ENCODE measurements at regions of chr16 and their contacts with region 1.

Region 1: GRCh38 chr16:2838928-2839327 is 8.8 kb downstream of the ZG16B start:
- DNase-seq: peak; percentile 85 to 88
- ATAC-seq: peak; percentile 76 to 91
- H3K4me3 ChIP-seq: no peak overlapping the region
- H3K27ac ChIP-seq: peak overlapping the region; percentile 60 to 90
- H3K4me1 ChIP-seq: peaks cover 41% of the 10 kb centered on the region
- CTCF ChIP-seq: peak; percentile 86
- EP300 ChIP-seq: no peak
- POLR2A ChIP-seq: no peak
- RAD21 ChIP-seq: peak; percentile 90 to 96

Region 2: GRCh38 chr16:2777231-2777902 is 61.6 kb before region 1 on chr16 and contains the start of gene ELOB:
- CTCF ChIA-PET with region 1: interaction called, 14 read pairs
- POLR2A ChIA-PET with region 1: no interaction called
- DNase-seq: peak; percentile 79 to 89
- ATAC-seq: peak; percentile 74 to 84
- H3K4me3 ChIP-seq: peak within 1 kb of the TSS; percentile 95
- H3K27ac ChIP-seq: peak within 1 kb of the TSS; percentile 99 to 100
- H3K4me1 ChIP-seq: peaks cover 26% of the 10 kb centered on the region
- CTCF ChIP-seq: no peak
- EP300 ChIP-seq: no peak
- POLR2A ChIP-seq: peak; percentile 70
- RAD21 ChIP-seq: 0 out of 5 replicates have a peak, but pooled peaks of 1 of the 2 experiments have one; percentile 12
- polyA plus RNA-seq, gene ELOB: 136 and 144 TPM in 2 replicates

Region 3: DNA sequence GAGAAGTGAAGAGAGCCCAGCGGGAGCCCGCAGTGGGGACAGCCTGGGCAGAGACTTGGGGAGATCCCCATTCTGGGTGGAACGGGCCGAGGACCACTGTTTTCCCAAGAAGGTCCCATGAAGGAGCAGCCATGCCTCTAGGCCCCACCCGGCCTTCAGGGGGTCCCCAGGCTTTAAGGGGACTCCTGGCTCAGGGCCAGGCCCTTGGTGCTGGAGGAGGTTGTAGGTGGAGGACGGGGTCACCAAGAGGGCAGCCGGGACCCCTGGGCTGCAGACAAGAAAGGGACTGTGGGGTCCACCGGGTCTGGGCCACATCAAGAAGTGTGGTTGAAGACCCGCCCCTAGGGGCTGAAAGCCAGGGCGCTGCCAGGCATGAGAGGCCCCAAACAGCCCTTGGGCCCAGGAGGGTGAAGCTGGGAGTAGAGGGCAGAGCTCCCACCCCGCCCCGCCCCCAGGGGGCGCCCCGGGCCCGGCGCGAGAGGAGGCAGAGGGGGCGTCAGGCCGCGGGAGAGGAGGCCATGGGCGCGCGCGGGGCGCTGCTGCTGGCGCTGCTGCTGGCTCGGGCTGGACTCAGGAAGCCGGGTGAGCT is 22.1 kb before region 1 on chr16 and contains the start of gene PRSS21:
- CTCF ChIA-PET with region 1: interaction called, 18 read pairs
- POLR2A ChIA-PET with region 1: no interaction called
- DNase-seq: no peak
- ATAC-seq: peak in 1 of 2 experiments; percentile 52; a peak in 3 of 6 replicates
- H3K4me3 ChIP-seq: no peak within 1 kb of the TSS
- H3K27ac ChIP-seq: no peak within 1 kb of the TSS
- H3K4me1 ChIP-seq: no peaks in the 10 kb centered on the region
- CTCF ChIP-seq: no peak
- EP300 ChIP-seq: no peak
- POLR2A ChIP-seq: no peak
- RAD21 ChIP-seq: no peak
- polyA plus RNA-seq, gene PRSS21: 0.16 and 0.23 TPM in 2 replicates

Region 4: DNA sequence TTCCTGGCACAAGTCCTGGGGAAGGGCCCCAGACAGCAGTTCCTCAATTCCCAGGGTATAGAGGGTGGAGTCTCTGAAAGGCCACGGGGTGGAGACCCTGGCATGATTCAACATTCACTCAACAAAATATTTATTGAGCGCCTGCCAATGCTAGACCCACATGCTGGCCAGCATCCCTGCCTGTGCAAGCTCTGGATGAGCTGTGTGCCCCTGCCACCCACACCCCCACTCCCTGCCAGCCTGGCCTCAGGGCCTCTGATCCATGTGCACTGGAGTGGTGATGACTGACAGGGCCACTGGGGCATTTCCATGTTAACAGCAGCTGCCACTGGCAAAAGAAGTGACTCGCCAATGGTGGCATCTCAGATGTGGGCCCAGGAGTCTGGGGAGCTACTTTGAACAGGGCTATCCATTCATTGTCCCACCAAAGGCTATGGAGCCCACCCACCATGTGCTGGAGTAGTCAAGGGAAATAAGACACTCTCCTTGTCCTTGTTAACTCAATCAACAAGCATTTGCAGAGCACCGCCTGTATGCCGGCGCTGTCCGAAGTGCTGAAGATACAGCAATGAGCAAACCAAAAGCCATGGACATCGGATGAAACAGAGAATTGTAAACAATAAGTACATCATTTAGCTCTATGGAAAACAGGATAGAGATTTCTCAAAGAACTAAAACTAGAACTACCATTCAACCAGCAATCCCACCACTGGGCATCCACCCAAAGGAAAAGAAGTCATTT is 22.1 kb after region 1 on chr16:
- CTCF ChIA-PET with region 1: interaction called, 295 read pairs
- POLR2A ChIA-PET with region 1: interaction called, 3 read pairs
- DNase-seq: no peak
- ATAC-seq: no peak
- H3K4me3 ChIP-seq: no peak overlapping the region
- H3K27ac ChIP-seq: peak overlapping the region in 1 of 2 experiments; percentile 57; a peak in 3 of 6 replicates
- H3K4me1 ChIP-seq: peaks cover 13% of the 10 kb centered on the region
- CTCF ChIP-seq: no peak
- EP300 ChIP-seq: no peak
- POLR2A ChIP-seq: no peak
- RAD21 ChIP-seq: no peak

Region 5: DNA sequence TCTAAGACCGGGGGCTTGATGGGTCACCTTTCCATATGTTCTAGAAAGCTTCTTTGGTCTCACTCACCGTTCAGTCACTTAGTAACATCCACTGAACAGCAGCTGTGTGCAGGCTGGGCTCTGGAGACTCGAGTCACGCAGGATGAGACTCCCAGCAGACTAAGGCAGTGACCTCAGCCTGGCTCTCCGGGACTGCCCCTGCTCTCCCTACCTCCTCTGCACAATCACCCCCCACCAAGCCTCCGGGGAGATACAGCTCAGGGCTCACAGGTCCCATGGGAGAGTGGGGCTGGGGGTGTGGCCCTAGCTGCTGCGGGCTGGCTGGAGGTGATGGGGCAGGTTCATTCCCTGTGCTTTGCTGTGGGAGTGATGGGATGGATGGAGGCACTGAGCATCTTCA is 58.2 kb after region 1 on chr16:
- CTCF ChIA-PET with region 1: interaction called, 12 read pairs
- POLR2A ChIA-PET with region 1: no interaction called
- DNase-seq: no peak
- ATAC-seq: no peak; a peak in 2 of 6 replicates
- H3K4me3 ChIP-seq: no peak overlapping the region
- H3K27ac ChIP-seq: no peak overlapping the region
- H3K4me1 ChIP-seq: peaks cover 22% of the 10 kb centered on the region
- CTCF ChIP-seq: no peak
- EP300 ChIP-seq: no peak
- POLR2A ChIP-seq: no peak
- RAD21 ChIP-seq: no peak

Region 6: DNA sequence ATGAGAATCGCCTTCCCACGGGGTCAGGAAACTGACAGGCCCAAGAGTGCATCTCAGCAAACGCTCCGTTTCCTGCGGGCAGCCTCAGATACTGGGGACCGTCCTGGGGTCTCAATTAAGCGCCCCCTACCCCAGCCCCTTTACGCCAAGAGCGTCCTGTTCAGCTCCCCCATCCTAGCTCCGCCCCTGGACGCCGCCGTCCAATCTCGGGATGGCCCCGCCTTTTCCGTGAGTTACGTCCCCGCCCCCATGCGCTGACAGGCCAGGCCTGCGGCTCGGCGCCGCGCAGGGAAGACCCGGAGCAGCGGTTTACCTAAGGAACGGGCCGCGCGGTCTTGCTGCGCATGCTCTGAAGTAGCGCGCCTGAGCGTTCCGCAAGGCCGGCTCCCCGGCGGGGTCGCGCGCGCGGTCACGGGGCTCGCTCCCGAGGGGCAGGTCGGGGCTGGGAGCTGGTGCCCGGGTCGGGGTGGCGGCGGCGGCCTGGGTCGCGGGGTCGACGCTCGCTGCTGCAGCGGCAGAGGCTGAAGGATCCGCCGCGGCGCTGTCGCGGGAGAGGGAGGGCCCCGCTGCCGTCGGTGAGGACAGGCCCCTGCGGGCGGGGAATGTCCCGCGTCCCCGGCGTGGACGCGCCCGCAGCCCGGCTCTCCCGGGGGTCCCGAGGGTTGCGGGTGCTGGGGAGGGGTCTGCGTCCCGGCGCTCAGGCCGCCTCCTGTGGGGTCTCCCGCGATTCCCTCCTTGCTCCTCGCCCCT is 72.8 kb after region 1 on chr16 and contains the start of gene FLYWCH1:
- CTCF ChIA-PET with region 1: interaction called, 87 read pairs
- POLR2A ChIA-PET with region 1: no interaction called
- DNase-seq: peak; percentile 94 to 99
- ATAC-seq: peak; percentile 86 to 93
- H3K4me3 ChIP-seq: peak within 1 kb of the TSS; percentile 65
- H3K27ac ChIP-seq: peak within 1 kb of the TSS; percentile 86 to 97
- H3K4me1 ChIP-seq: peaks cover 25% of the 10 kb centered on the region
- CTCF ChIP-seq: no peak
- EP300 ChIP-seq: no peak
- POLR2A ChIP-seq: peak; percentile 73
- RAD21 ChIP-seq: no peak
- polyA plus RNA-seq, gene FLYWCH1: 9.3 and 10.6 TPM in 2 replicates

Region 7: GRCh38 chr16:2980227-2981086 is 141.5 kb after region 1 on chr16 and contains the start of gene PKMYT1:
- CTCF ChIA-PET with region 1: no interaction called
- POLR2A ChIA-PET with region 1: no interaction called
- DNase-seq: peak; percentile 85 to 98
- ATAC-seq: peak; percentile 70 to 82
- H3K4me3 ChIP-seq: peak within 1 kb of the TSS; percentile 71
- H3K27ac ChIP-seq: peak within 1 kb of the TSS; percentile 91 to 95
- H3K4me1 ChIP-seq: peaks cover 18% of the 10 kb centered on the region; the same call in 2 of the 3 replicates
- CTCF ChIP-seq: no peak
- EP300 ChIP-seq: no peak
- POLR2A ChIP-seq: peak; percentile 92
- RAD21 ChIP-seq: no peak
- polyA plus RNA-seq, gene PKMYT1: 8.4 and 10.5 TPM in 2 replicates

Region 8: GRCh38 chr16:3029537-3030402 is 190.8 kb after region 1 on chr16:
- CTCF ChIA-PET with region 1: no interaction called
- POLR2A ChIA-PET with region 1: no interaction called
- DNase-seq: no peak
- ATAC-seq: no peak
- H3K4me3 ChIP-seq: no peak overlapping the region
- H3K27ac ChIP-seq: no peak overlapping the region
- H3K4me1 ChIP-seq: peaks cover 14% of the 10 kb centered on the region
- CTCF ChIP-seq: no peak
- EP300 ChIP-seq: no peak
- POLR2A ChIP-seq: no peak
- RAD21 ChIP-seq: no peak

Region 9: GRCh38 chr16:3143612-3144320 is 304.8 kb after region 1 on chr16:
- CTCF ChIA-PET with region 1: no interaction called
- POLR2A ChIA-PET with region 1: no interaction called
- DNase-seq: no peak
- ATAC-seq: peak; percentile 6 to 14; a peak in 2 of 6 replicates
- H3K4me3 ChIP-seq: no peak overlapping the region
- H3K27ac ChIP-seq: no peak overlapping the region
- H3K4me1 ChIP-seq: no peaks in the 10 kb centered on the region
- CTCF ChIP-seq: no peak
- EP300 ChIP-seq: no peak
- POLR2A ChIP-seq: no peak
- RAD21 ChIP-seq: no peak

Region 10: GRCh38 chr16:3264137-3265036 is 425.5 kb after region 1 on chr16:
- CTCF ChIA-PET with region 1: no interaction called
- POLR2A ChIA-PET with region 1: no interaction called
- DNase-seq: peak; percentile 65 to 94
- ATAC-seq: peak; percentile 90 to 94
- H3K4me3 ChIP-seq: peak overlapping the region; percentile 62
- H3K27ac ChIP-seq: peak overlapping the region; percentile 75 to 81
- H3K4me1 ChIP-seq: no peaks in the 10 kb centered on the region
- CTCF ChIP-seq: no peak
- EP300 ChIP-seq: no peak
- POLR2A ChIP-seq: peak; percentile 24; the same call in 1 of the 2 replicates
- RAD21 ChIP-seq: 0 out of 5 replicates have a peak, but pooled peaks of 1 of the 2 experiments have one; percentile 19

Measured in A549 (cell line).